Right ventricle myocardium inferior (tissue), 1 donor: ENCODE measurements at regions of chr10 and their contacts with region 1.

Region 1: DNA sequence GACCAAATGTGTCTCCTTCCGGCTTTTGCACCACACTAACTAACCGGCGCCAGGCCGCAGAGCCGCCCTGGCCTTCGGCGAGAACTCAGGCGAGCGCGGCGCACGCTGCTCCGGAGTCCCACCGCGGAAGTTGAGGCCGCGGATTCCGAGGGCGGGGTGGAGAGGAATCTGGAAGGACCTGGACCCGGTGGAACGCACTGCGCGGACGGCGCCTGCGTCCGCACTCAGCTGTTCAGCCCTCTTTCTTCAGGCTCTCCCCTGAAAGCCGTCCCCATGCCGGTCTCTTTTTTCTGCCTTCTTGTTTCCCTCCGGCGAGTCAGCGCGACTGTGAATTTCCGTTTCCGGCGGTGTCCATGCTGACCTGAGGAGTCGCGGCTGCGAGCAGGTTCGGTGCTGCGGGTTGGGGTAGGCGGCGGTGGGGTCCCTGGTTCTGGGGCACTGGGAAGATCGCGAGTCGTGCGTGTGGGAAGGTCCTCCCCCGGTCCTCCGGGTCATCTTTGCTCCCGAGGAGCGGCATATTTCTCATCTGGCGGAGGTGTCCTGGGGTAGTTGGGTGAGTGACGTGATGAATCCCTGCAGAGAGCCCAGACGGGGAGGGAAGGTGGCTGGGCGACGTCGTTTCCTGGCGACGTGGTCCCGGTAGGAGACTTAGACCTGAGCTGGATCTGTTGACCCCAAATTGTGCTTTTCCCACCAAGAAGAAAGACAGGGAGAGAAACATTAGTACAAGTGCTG is at the start of gene BMS1:
- DNase-seq: peak; percentile 92
- ATAC-seq: peak; percentile 96
- total RNA-seq, gene BMS1: 15.0 TPM

Region 2: DNA sequence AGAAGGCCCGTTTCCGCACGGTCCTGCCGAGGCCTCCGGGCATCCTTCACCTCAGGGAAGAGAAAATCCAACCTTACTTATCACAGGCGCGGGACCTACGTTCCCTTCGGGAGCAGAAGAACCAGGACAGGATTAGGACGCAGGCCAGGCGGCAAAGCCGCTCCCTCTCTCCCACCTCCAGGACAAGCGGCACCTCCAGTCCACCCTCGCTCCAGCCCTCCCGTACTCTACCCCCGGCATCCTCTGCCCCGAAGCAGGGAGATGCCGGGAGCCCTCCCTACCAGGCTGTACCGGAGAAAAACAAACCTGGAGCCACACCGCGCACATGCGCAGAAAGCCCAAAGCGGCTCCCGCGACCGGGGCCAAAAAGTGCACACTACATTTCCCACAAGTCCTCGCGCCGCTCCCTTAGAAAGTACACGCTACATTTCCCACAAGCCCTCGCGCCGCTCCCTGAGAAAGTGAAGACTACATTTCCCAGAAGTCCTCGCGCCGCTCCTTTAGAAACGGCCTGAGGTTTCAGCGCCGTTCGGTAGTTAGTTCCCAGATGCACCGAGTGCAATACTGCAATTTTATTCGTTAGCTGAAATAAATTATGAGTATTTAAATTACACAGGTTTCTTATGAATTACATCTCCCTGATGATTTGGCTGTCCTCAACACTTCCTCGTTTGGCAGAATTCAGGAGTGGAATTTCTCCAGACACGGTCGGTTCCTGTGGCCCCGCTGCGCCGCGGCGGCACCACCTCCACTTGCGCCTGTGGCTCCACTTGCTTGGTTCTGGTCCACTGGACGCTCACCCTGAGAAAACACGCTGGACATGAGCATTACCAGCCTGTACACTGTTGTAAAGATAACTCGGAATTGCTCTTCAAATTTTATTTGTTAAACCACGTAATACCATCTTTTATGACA is 229.9 kb before region 1 on chr10:
- intact Hi-C with region 1: loop called (anchors 10 kb)
- DNase-seq: peak; percentile 98
- ATAC-seq: peak; percentile 99

Region 3: DNA sequence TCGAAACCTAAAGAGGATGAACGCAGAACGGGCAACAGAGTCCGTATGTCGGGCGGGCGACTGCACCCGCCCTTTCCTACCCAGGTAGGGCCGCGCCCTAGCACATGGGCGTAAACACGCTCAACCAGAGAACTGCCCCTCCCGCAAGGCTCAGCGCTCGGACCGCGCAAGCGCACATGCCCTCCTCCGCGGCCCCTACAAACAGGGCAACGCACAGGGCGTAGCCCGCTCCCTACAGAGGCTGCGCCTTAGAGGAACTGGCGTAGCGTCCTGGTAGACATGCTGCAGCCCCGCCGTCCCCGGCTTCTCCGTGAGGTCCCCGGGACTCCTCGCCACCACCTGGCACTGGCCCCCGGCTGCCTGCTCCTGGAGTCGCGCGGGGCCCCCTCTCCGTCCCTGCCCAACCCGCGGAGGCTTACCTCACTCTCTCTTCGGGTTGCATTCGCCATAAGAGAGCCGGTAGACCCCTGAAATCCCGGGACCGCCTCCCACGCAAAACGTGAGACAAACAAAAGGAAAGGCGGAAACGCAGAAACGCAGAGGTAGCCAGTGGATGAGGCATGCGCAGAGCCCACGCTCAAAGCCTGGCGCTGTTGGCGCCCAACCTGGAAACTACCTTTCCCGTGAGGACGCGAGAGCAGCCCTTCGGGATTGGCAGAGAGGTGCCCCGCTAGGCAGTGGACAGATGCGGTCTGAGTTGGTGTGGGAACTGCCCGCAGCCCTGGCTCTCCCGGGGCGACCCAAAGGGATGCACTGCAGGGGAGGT is 144.4 kb before region 1 on chr10 and contains the start of gene ZNF33B:
- intact Hi-C with region 1: loop called (anchors 10 kb)
- DNase-seq: peak; percentile 96
- ATAC-seq: peak; percentile 99
- total RNA-seq, gene ZNF33B: 13.7 TPM

Region 4: GRCh38 chr10:42753126-42753506 is 29.5 kb before region 1 on chr10:
- intact Hi-C with region 1: loop called (anchors 1 kb)
- DNase-seq: peak; percentile 84
- ATAC-seq: peak; percentile 90

Region 5: DNA sequence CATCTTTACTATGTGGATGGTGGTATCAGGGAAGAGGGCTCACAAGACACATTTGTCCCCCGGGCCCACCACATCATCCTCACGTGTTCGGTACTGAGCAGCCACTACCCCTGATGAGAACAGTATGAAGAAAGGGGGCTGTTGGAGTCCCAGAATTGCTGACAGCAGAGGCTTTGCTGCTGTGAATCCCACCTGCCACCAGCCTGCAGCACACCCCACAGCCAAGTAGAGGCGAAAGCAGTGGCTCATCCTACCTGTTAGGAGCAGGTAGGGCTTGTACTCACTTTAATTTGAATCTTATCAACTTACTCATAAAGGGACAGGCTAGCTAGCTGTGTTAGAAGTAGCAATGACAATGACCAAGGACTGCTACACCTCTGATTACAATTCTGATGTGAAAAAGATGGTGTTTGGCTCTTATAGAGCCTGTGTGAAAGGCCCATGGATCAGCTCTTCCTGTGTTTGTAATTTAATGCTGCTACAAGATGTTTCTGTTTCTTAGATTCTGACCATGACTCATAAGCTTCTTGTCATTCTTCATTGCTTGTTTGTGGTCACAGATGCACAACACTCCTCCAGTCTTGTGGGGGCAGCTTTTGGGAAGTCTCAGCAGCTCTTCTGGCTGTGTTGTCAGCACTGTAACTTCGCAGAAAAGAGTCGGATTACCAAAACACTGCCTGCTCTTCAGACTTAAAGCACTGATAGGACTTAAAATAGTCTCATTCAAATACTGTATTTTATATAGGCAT is 346.5 kb after region 1 on chr10:
- intact Hi-C with region 1: no loop called
- DNase-seq: no peak
- ATAC-seq: no peak